Activated naive CD4-positive, alpha-beta T cell treated with anti-CD3 and anti-CD28 coated beads, Interleukin-2, amount 10 ng/mL, durations not matched to agents 7 days and 5 days (primary cell): ENCODE measurements at regions of chr2 and their contacts with region 1.

Region 1: GRCh38 chr2:25197336-25198208 is 29.2 kb upstream of the POMC start:
- DNase-seq: no peak
- H3K4me3 Mint-ChIP-seq: no peak overlapping the region
- H3K27ac Mint-ChIP-seq: no peak overlapping the region
- H3K4me1 Mint-ChIP-seq: peaks cover 13% of the 10 kb centered on the region
- H3K27me3 Mint-ChIP-seq: peaks cover 48% of the 10 kb centered on the region

Region 2: DNA sequence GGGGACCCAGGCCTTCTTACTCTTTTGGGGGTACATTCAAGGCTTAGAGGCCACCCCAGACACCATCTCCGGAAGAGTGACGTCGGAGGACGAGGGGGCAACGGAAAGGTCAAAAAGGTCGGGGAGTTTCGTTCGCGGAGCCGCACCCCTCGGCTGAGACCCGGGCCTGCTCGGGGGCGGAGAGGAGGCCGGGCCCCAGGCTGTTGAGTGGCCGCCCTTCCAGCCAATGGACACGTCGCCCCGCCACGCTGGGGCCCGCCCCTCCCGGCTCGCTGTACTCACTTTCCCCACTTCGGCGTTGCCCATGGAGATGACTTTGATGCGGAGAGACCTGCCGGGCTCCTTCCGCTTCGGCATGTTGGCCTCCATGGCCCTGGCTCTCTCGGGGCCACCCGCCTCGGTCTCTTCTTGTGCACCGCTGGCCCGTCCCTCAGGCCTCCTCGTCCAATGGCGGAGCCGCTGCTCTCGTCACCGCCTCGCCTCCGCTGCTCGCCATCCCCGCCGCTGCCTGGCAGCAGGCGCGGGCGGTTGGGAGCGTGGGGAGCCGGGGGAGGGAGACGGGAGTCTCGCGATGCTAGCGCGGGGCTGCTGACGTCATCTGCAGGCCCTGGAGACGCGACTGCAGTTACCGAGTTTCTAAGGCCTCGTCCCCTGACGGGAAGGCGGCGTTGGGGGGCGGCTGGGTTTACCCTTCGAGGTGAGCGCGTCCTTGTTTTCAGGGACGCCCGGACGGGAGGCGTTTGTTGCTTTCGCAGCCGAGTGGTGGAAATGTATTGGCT is 225.8 kb before region 1 on chr2 and contains the start of gene DNAJC27:
- CTCF ChIA-PET with region 1: interaction called, 24 read pairs
- DNase-seq: peak; percentile 99
- H3K4me3 Mint-ChIP-seq: peak within 1 kb of the TSS; percentile 97
- H3K27ac Mint-ChIP-seq: peak within 1 kb of the TSS; percentile 100
- H3K4me1 Mint-ChIP-seq: peaks cover 36% of the 10 kb centered on the region
- H3K27me3 Mint-ChIP-seq: peaks cover 10% of the 10 kb centered on the region

Region 3: GRCh38 chr2:25165992-25166875 is 31.3 kb before region 1 on chr2:
- CTCF ChIA-PET with region 1: interaction called, 64 read pairs
- DNase-seq: peak; percentile 69
- H3K4me3 Mint-ChIP-seq: no peak overlapping the region
- H3K27ac Mint-ChIP-seq: no peak overlapping the region
- H3K4me1 Mint-ChIP-seq: peaks cover 36% of the 10 kb centered on the region
- H3K27me3 Mint-ChIP-seq: peaks cover 80% of the 10 kb centered on the region